Activated CD4-positive, alpha-beta T cell treated with anti-CD3 and anti-CD28 coated beads, Interleukin-2, amount 10 ng/mL, durations not matched to agents 24 days and 14 days (primary cell): ENCODE measurements at regions of chr6 and their contacts with region 1.

Region 1: GRCh38 chr6:154928325-154928922 is 66.7 kb upstream of the TIAM2 start:
- DNase-seq: peak; percentile 90
- H3K4me3 Mint-ChIP-seq: no peak overlapping the region
- H3K27ac Mint-ChIP-seq: peak overlapping the region; percentile 12
- H3K4me1 Mint-ChIP-seq: peaks cover 19% of the 10 kb centered on the region
- H3K27me3 Mint-ChIP-seq: no peaks in the 10 kb centered on the region

Region 2: DNA sequence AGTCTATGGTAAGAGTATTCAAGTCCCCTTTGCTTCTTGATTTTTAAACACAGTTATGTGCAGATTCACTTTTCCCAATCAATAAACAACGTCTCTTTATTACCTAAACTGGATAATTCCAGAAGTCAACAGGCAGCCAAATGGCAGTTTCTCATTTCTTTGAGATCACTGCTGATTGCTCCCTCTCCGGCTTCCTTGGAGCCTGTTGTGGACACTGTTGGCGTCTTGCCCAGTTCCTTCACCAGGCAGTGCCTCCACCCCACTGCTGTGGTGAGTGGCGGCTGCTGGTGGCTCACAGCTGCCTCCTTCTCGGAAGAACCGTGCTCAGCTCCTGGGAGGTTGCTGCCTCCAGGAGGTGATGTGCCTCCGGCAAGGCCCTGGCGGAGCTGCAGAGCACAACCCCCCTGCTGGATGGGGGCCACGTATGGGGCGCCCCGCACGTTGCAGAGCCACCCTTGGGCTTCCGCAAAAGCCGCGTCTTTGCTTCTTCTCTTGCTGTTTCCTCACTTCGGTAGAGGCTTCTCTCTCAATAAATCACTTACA is 312.9 kb before region 1 on chr6:
- intact Hi-C with region 1: no loop called
- DNase-seq: no peak
- H3K4me3 Mint-ChIP-seq: no peak overlapping the region
- H3K27ac Mint-ChIP-seq: no peak overlapping the region
- H3K4me1 Mint-ChIP-seq: peaks cover 8% of the 10 kb centered on the region
- H3K27me3 Mint-ChIP-seq: peaks cover 3% of the 10 kb centered on the region

Region 3: GRCh38 chr6:154868143-154868594 is 60.3 kb before region 1 on chr6:
- intact Hi-C with region 1: no loop called
- DNase-seq: no peak
- H3K4me3 Mint-ChIP-seq: no peak overlapping the region
- H3K27ac Mint-ChIP-seq: no peak overlapping the region
- H3K4me1 Mint-ChIP-seq: peaks cover 3% of the 10 kb centered on the region
- H3K27me3 Mint-ChIP-seq: no peaks in the 10 kb centered on the region

Region 4: DNA sequence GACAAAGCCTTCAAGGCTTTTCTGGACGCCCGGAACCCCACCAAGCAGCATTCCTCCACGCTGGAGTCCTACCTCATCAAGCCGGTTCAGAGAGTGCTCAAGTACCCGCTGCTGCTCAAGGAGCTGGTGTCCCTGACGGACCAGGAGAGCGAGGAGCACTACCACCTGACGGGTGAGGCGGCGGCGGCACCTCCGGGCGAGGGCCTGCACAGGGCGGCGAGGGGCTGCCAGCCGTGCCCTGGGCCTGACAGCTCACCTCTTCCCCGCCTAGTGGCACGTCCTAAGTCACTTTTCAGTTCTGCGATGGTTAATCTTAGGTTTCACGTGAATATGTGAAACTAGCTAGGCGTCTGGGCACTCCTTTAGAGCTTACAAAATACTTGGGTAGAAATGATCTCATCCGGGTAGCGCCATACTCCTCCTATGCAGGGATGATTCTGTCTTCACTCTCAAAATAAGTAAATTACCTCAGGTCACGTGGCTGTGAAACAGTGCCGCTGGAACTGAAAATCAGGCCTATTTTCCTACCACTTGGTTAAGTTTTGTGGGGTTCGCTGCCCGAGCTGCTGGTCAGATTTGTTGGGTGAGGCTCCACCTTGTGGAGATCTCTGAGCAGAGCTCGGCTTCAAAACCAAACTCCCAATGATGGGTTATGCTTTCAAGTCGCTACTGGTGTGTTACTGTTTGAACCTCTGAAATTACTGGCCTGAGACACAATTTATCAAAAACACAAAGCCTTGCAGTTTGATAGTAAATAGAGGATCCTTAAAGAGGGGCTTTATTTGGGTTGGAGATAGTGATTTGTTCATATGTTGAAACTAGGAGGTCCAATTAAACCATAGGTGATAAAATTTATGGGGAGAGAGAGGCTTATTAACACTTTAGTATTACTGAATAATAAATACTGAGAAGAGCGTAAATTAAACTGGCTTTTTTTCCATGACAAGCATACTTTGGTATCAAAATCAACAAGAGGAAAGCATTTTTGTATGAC is 319.9 kb after region 1 on chr6:
- intact Hi-C with region 1: loop called (anchors 1 kb)
- DNase-seq: peak; percentile 63
- H3K4me3 Mint-ChIP-seq: no peak overlapping the region
- H3K27ac Mint-ChIP-seq: no peak overlapping the region
- H3K4me1 Mint-ChIP-seq: no peaks in the 10 kb centered on the region
- H3K27me3 Mint-ChIP-seq: no peaks in the 10 kb centered on the region

Region 5: GRCh38 chr6:155273431-155273830 is 345.0 kb after region 1 on chr6:
- intact Hi-C with region 1: loop called (anchors 1 kb)
- DNase-seq: no peak
- H3K4me3 Mint-ChIP-seq: no peak overlapping the region
- H3K27ac Mint-ChIP-seq: peak overlapping the region; percentile 21
- H3K4me1 Mint-ChIP-seq: peaks cover 4% of the 10 kb centered on the region
- H3K27me3 Mint-ChIP-seq: no peaks in the 10 kb centered on the region